GM23248 (cell line): ENCODE measurements at regions of chrX and their contacts with region 1.

Region 1: GRCh38 chrX:38754102-38754790 is 47.0 kb upstream of the MID1IP1 start:
- DNase-seq: peak; percentile 61
- H3K4me3 ChIP-seq: no peak overlapping the region
- H3K27ac ChIP-seq: no peak overlapping the region
- H3K4me1 ChIP-seq: no peaks in the 10 kb centered on the region
- H3K27me3 ChIP-seq: no peaks in the 10 kb centered on the region

Region 2: DNA sequence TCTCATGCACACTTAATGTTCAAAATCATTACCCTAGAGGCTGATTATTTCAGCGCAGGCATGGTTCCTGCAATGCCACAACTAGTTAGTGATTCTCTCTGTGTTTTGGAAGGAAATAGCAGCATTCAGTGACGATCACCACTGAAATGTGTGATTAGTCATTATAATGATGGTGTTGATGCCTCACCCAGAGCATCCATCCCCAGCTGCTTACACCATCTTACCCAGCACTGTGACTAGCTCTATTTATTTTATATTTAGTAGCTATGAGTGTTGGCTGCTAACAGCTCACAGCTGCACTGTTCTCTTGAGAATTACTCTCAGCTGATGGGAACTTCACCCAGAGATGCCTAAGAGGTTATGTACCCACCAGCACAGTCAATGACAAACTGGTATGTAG is 253.4 kb before region 1 on chrX:
- in situ Hi-C with region 1: no loop called
- DNase-seq: peak; percentile 6
- H3K4me3 ChIP-seq: no peak overlapping the region
- H3K27ac ChIP-seq: no peak overlapping the region
- H3K4me1 ChIP-seq: no peaks in the 10 kb centered on the region
- H3K27me3 ChIP-seq: no peaks in the 10 kb centered on the region

Region 3: DNA sequence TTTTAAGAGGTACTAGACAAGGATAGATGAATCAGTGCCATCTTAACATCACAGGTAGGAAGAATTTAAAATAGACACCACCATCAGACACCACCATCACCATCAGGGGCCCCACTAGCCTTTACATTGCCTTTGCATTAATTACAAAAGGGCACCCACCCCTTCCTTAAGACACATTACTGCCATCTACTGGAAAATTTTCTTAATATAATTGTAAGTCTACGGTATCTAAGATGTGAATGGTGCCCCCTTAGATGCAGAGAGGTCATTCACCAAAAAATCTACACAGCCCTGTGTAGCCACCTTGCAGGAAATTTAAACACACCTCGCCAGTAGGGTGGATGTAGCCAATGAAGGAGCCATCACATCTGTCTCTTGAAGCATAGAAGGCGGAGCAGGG is 231.1 kb after region 1 on chrX:
- in situ Hi-C with region 1: loop called (anchors 25 kb)
- DNase-seq: peak; percentile 41
- H3K4me3 ChIP-seq: no peak overlapping the region
- H3K27ac ChIP-seq: no peak overlapping the region
- H3K4me1 ChIP-seq: no peaks in the 10 kb centered on the region
- H3K27me3 ChIP-seq: no peaks in the 10 kb centered on the region

Region 4: GRCh38 chrX:39149761-39150160 is 395.5 kb after region 1 on chrX:
- in situ Hi-C with region 1: loop called (anchors 10 kb)
- DNase-seq: peak; percentile 65
- H3K4me3 ChIP-seq: no peak overlapping the region
- H3K27ac ChIP-seq: no peak overlapping the region
- H3K4me1 ChIP-seq: no peaks in the 10 kb centered on the region
- H3K27me3 ChIP-seq: no peaks in the 10 kb centered on the region